Gastrocnemius medialis (tissue), 4 donors: ENCODE measurements at regions of chr4 and their contacts with region 1.

Region 1: GRCh38 chr4:185587427-185588161 is 52.3 kb upstream of the PDLIM3 start:
- DNase-seq: peak in 1 of 2 donors; percentile 55
- ATAC-seq: peak; percentile 18 to 37
- H3K4me3 ChIP-seq: peak overlapping the region in 3 of 4 donors; percentile 5 to 45 (median 26)
- H3K27ac ChIP-seq: peak overlapping the region; percentile 64 to 88 (median 76)
- H3K4me1 ChIP-seq: peaks cover 29 to 31% of the 10 kb centered on the region in 2 donors
- H3K27me3 ChIP-seq: no peaks in the 10 kb centered on the region
- CTCF ChIP-seq: no peak
- POLR2A ChIP-seq: peak in 1 of 2 donors; percentile 38

Region 2: DNA sequence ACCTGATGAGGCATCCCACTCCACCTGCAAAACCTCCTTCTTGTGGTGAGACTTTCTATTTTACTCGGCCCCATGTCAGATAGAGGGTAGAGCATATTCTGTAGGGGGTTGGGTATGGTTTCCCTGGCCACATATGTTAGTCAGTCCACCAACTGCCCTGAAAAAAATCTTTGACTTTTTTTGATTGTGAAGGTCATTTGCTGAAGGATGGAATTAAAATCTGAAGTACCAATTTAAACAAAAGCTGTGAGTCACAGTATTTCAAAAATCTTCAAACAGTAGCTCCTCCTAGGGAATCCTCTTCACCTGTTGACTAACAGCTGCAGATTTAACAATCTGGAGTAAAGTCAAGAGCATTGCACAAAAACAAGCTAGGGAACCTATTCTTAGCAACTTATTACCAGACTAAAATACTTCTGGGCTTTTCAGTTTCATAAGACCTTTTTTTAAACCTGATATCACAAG is 108.1 kb before region 1 on chr4:
- in situ Hi-C with region 1: loop called (anchors 5 to 10 kb)
- intact Hi-C with region 1: loop called (anchors 1 kb)
- DNase-seq: peak in 1 of 2 donors; percentile 31
- ATAC-seq: peak; percentile 96
- H3K4me3 ChIP-seq: peak overlapping the region in 1 of 4 donors; percentile 24
- H3K27ac ChIP-seq: peak overlapping the region; percentile 78 to 90 (median 82)
- H3K4me1 ChIP-seq: peaks cover 29 to 33% of the 10 kb centered on the region in 2 donors
- H3K27me3 ChIP-seq: no peaks in the 10 kb centered on the region
- CTCF ChIP-seq: no peak
- POLR2A ChIP-seq: no peak

Region 3: DNA sequence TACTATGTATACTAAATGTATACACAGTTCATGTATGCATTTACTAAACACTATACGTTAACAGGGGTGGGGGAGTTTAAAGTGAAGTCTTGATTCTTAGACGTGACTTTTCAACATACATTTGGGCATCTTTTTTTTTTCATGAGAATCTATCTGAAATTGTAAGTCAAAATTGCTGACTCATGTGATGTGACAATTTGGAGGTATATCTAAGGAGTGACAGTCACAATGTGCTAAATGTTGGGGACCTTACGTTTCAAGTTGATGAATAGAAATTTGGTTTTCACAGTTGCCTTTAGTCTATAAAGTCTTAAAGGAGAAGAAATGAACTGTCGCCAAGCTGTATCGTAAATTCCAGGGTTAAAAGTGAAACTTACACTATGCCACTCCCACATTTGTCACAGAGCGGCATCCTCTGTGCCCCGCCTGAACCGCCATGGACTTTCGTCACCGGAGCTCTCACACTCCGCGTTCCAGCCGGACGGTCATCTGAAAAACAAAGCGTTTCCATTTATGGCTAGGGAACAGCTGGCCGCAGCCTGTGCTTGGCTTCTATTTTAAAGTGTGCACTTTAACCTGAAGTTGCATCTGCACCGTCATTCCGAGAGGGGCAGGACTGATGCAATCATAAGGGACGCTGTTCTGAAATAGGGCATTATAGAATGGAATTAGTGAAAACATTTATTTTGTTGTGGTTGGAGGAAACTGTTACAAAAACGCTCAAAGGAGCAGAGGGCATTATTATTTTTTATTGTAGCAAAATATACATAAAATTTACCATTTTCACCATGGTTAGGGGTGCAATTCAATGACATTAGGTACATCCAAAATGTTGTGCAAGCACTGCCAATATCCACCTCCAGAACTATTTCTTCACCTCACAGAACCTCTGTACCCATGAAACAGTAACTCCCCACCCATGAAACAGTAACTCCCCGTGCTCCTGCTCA is 83.2 kb before region 1 on chr4:
- in situ Hi-C with region 1: no loop called
- intact Hi-C with region 1: loop called (anchors 2 kb)
- DNase-seq: peak; percentile 91 to 97
- ATAC-seq: peak; percentile 82 to 87
- H3K4me3 ChIP-seq: peak overlapping the region in 3 of 4 donors; percentile 10 to 22 (median 17)
- H3K27ac ChIP-seq: peak overlapping the region; percentile 83 to 96 (median 92)
- H3K4me1 ChIP-seq: peaks cover 41 to 58% of the 10 kb centered on the region in 2 donors
- H3K27me3 ChIP-seq: no peaks in the 10 kb centered on the region
- CTCF ChIP-seq: no peak
- POLR2A ChIP-seq: peak in 1 of 2 donors; percentile 41

Region 4: DNA sequence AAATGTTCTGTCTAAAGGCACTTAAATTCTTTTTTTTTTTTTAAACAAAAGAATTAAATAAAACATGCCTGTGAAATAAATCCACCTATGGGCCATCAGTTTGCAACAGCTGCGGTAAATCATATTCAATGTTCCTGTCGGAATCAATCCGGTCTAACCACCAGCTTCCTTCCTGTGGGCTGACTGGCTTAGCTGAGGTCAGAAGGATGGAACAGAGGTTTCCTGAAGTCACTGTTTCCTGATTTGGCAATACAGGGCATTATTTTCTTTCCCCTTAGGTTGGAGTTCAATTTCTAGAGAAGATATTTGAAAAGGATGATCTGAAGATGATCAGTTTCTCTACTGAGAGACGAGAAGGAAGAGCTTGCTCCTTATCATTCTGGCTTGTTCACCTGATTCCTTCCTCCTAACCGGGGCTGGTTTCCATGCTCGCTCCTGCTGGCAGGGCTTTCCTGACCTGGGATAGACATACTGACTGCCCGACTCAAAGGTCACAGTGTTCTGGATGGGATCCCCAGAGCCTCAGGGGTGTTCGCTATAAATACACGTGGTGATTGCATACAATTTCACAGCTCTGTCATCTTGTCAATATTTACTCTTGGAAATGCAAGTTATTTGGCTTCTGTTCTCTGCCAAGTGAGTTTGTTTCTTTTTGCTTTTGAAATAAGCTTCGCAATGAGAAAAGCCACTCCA is 74.0 kb before region 1 on chr4:
- in situ Hi-C with region 1: loop called in 2 of 4 experiments (anchors 10 kb)
- intact Hi-C with region 1: no loop called
- DNase-seq: peak; percentile 63 to 75
- ATAC-seq: peak; percentile 81 to 85
- H3K4me3 ChIP-seq: no peak overlapping the region
- H3K27ac ChIP-seq: peak overlapping the region; percentile 83 to 96 (median 92)
- H3K4me1 ChIP-seq: peaks cover 86 to 95% of the 10 kb centered on the region in 2 donors
- H3K27me3 ChIP-seq: no peaks in the 10 kb centered on the region
- CTCF ChIP-seq: no peak
- POLR2A ChIP-seq: peak in 1 of 2 donors; percentile 13